Activated CD8-positive, alpha-beta T cell treated with anti-CD3 and anti-CD28 coated beads, Interleukin-2, amount 10 ng/mL, durations not matched to agents 7 days and 5 days (primary cell): ENCODE measurements at regions of chr1 and their contacts with region 1.

Region 1: GRCh38 chr1:3485016-3485415 is 30.6 kb downstream of the ARHGEF16 start:
- DNase-seq: no peak
- ATAC-seq: no peak
- H3K4me3 Mint-ChIP-seq: no peak overlapping the region
- H3K27ac Mint-ChIP-seq: no peak overlapping the region
- H3K4me1 Mint-ChIP-seq: no peaks in the 10 kb centered on the region
- H3K27me3 Mint-ChIP-seq: no peaks in the 10 kb centered on the region

Region 2: DNA sequence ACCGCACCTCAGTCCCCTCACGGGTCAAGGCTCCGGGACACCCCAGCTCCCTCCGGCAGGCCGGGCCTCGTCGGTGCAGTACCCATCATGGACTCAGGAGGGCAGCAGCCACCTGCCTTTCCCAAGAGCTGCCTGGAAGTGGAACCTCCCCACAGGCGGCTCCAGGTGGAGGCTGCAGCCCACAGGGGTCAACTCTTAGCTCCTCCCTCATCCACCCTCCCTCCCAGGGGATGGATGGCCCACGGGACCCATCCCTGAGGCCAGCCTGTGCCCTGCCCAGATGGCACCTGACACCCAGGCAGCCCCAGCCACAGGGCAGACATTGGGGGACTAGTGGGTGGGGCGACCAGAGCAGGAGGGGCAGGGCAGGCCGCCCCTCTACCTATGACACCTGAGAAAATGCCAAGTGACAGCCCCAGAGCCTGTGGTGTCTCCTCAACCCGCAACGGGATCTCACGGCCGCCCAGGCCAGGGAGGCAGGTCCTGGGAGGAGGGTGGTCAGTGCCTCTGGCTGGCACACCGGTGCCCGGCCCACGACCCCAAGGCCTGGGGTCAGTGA is 31.7 kb before region 1 on chr1:
- CTCF ChIA-PET with region 1: interaction called, 12 read pairs
- POLR2A ChIA-PET with region 1: no interaction called
- DNase-seq: peak; percentile 75
- ATAC-seq: peak; percentile 83
- H3K4me3 Mint-ChIP-seq: no peak overlapping the region
- H3K27ac Mint-ChIP-seq: no peak overlapping the region
- H3K4me1 Mint-ChIP-seq: peaks cover 2% of the 10 kb centered on the region
- H3K27me3 Mint-ChIP-seq: peaks cover 5% of the 10 kb centered on the region

Region 3: GRCh38 chr1:3518256-3518655 is 33.2 kb after region 1 on chr1:
- CTCF ChIA-PET with region 1: no interaction called
- POLR2A ChIA-PET with region 1: no interaction called
- DNase-seq: peak; percentile 43
- ATAC-seq: no peak
- H3K4me3 Mint-ChIP-seq: no peak overlapping the region
- H3K27ac Mint-ChIP-seq: no peak overlapping the region
- H3K4me1 Mint-ChIP-seq: no peaks in the 10 kb centered on the region
- H3K27me3 Mint-ChIP-seq: no peaks in the 10 kb centered on the region